Heart left ventricle (tissue), 16 donors: ENCODE measurements at regions of chr19 and their contacts with region 1.

Region 1: GRCh38 chr19:17854061-17854460 is 5.6 kb upstream of the RPL18A start:
- DNase-seq: no peak
- ATAC-seq: no peak
- H3K4me3 ChIP-seq: no peak overlapping the region
- H3K27ac ChIP-seq: no peak overlapping the region
- H3K4me1 ChIP-seq: peaks cover 0 to 34% (median under 1%) of the 10 kb centered on the region in 12 donors
- H3K27me3 ChIP-seq: no peaks in the 10 kb centered on the region
- CTCF ChIP-seq: no peak
- POLR2A ChIP-seq: no peak

Region 2: GRCh38 chr19:17784201-17785008 is 69.7 kb before region 1 on chr19:
- intact Hi-C with region 1: loop called in 2 of 10 experiments (anchors 2 to 5 kb)
- DNase-seq: peak; percentile 39 to 73 (median 58)
- ATAC-seq: peak in 3 of 4 donors; percentile 34 to 70 (median 67)
- H3K4me3 ChIP-seq: no peak overlapping the region
- H3K27ac ChIP-seq: no peak overlapping the region
- H3K4me1 ChIP-seq: peaks cover 0 to 5% (median 0%) of the 10 kb centered on the region in 12 donors
- H3K27me3 ChIP-seq: peaks cover 0 to 32% (median 13%) of the 10 kb centered on the region in 9 donors
- CTCF ChIP-seq: peak; percentile 65 to 82 (median 76)
- POLR2A ChIP-seq: no peak

Region 3: DNA sequence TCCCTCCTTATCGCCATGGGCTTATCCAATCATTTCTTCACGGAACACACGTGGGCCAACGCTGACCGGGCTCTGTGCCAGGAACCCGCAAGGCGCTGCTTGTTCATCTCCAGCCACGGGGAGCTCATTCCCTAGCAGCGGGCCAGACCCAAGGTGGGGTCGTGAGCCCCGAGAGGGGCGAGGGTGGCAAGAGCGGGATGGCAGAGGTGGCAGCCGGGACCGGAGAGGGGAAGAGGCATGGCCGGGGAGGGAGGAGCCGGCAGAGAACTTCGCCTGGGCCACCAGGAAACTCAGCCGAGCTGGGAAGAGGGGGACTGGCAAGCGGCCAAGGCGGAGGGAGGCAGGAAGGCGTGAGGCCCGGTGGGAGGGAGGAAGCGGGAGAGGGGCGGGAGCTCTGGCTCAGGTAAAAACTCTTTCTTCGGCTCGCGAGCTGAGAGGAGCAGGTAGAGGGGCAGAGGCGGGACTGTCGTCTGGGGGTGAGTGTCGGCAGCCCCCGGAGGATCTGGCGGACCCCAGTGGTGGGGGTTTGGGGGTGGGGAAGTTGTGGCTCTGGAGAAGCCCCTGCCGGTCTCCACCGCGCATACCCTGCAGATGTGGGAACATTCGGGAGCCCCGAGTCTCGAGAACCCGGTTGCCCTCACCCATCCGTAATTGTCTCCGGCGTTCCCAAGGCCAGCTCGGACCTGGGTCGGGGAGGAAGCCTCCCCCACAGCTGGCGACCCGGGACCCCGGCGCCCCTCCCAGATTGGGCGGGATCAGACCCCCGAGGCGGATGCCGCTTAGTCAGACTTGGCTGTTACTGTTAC is 59.1 kb before region 1 on chr19 and contains the start of gene B3GNT3:
- intact Hi-C with region 1: no loop called
- DNase-seq: peak in 1 of 5 donors; percentile 76
- ATAC-seq: no peak
- H3K4me3 ChIP-seq: peak within 1 kb of the TSS in 1 of 12 donors; percentile 25
- H3K27ac ChIP-seq: no peak within 1 kb of the TSS
- H3K4me1 ChIP-seq: peaks cover 0 to 20% (median 0%) of the 10 kb centered on the region in 12 donors
- H3K27me3 ChIP-seq: peaks cover 12 to 72% (median 35%) of the 10 kb centered on the region in 9 donors
- CTCF ChIP-seq: no peak
- POLR2A ChIP-seq: no peak
- total RNA-seq, gene B3GNT3: not detected

Region 4: DNA sequence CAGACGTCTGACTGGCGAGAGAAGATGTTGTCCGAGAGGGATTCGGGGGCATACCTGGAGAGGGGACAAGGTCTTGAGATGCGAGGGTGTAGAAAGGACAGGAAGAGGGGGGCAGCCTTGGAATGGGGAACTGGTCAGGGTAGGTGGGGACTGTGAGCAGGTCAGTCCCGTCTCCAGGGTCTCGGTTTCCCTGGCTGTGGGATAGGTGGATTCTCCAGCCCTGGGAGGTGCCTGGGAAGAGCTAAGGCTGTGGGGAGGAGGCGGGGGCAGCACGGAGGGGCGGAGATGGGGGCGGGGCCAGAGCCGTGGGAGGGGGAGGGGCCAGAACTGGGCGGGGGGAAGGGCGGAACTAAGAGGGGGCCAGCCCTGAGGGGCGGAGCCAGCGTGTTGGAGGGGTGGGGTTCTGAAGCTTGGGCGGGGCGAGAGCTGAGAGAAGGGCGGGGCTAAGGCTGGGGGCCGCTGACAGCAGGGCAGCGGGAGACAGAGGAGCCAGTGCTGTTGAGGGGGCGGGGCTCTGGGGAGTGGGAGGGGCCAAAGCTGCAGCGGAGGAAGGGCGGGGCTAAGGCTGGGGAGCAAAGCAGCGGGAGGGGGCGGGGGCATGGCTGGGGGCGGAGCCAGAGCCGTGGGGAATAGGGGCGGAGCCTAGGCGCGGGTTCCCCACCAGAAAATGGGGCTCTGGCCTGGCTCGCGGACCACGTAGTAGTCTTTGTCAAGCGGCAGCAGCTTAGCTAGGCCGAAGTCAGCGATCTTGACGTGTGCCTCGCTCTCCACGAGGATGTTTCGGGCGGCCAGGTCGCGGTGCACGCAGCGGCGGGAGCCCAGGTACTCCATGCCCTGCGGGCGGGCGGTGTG is 23.3 kb before region 1 on chr19:
- intact Hi-C with region 1: no loop called
- DNase-seq: peak in 3 of 5 donors; percentile 33 to 42 (median 36)
- ATAC-seq: peak; percentile 43 to 82 (median 80)
- H3K4me3 ChIP-seq: peak overlapping the region in 7 of 12 donors; percentile 10 to 30 (median 21)
- H3K27ac ChIP-seq: no peak overlapping the region
- H3K4me1 ChIP-seq: peaks cover 0 to 16% (median 0%) of the 10 kb centered on the region in 12 donors
- H3K27me3 ChIP-seq: peaks cover 0 to 35% (median 8%) of the 10 kb centered on the region in 9 donors
- CTCF ChIP-seq: no peak
- POLR2A ChIP-seq: no peak